CD14-positive monocyte (primary cell): ENCODE measurements at regions of chr6 and their contacts with region 1.

Region 1: GRCh38 chr6:15691250-15691869 is 28.5 kb upstream of the DTNBP1 start:
- DNase-seq: peak; percentile 84 to 90 (median 88)
- H3K4me3 ChIP-seq: no peak overlapping the region
- H3K4me3 Mint-ChIP-seq: peak overlapping the region in 1 of 2 donors; percentile 35
- H3K27ac ChIP-seq: peak overlapping the region in 1 of 2 donors; percentile 50
- H3K27ac Mint-ChIP-seq: peak overlapping the region in 6 of 7 donors; percentile 0 to 96 (median 53)
- H3K4me1 ChIP-seq: peaks cover 23 to 24% of the 10 kb centered on the region in 2 donors
- H3K4me1 Mint-ChIP-seq: peaks cover 25% of the 10 kb centered on the region
- H3K27me3 ChIP-seq: no peaks in the 10 kb centered on the region
- H3K27me3 Mint-ChIP-seq: no peaks in the 10 kb centered on the region
- CTCF ChIP-seq: peak; percentile 100

Region 2: DNA sequence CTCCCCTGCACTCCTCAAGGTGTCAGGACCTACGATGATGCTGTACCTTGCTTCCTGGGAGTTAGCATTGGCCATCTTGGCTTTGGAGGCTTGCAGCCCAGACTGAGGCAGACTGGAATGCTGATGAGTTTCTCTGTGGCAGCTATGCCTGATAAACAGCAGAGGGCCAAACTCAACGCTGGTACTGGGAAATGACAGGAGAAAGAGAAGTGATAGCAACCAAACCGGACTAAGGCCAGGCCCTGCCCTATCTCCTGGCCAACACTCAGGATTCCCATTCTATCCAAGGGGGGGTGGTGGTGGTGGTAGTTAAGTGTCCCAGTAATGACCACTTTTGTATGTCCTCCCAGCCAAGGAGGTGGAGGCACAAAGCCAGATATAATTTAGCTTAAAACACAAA is 61.5 kb after region 1 on chr6:
- intact Hi-C with region 1: no loop called
- DNase-seq: no peak
- H3K4me3 ChIP-seq: no peak overlapping the region
- H3K4me3 Mint-ChIP-seq: no peak overlapping the region
- H3K27ac ChIP-seq: no peak overlapping the region
- H3K27ac Mint-ChIP-seq: no peak overlapping the region
- H3K4me1 ChIP-seq: no peaks in the 10 kb centered on the region
- H3K4me1 Mint-ChIP-seq: no peaks in the 10 kb centered on the region
- H3K27me3 ChIP-seq: no peaks in the 10 kb centered on the region
- H3K27me3 Mint-ChIP-seq: no peaks in the 10 kb centered on the region
- CTCF ChIP-seq: no peak

Region 3: GRCh38 chr6:16183187-16183664 is 491.9 kb after region 1 on chr6:
- intact Hi-C with region 1: loop called (anchors 5 kb)
- DNase-seq: peak; percentile 20 to 46 (median 38)
- H3K4me3 ChIP-seq: no peak overlapping the region
- H3K4me3 Mint-ChIP-seq: no peak overlapping the region
- H3K27ac ChIP-seq: no peak overlapping the region
- H3K27ac Mint-ChIP-seq: peak overlapping the region in 1 of 7 donors; percentile 4
- H3K4me1 ChIP-seq: peaks cover 0 to 9% of the 10 kb centered on the region in 2 donors
- H3K4me1 Mint-ChIP-seq: peaks cover 15% of the 10 kb centered on the region
- H3K27me3 ChIP-seq: no peaks in the 10 kb centered on the region
- H3K27me3 Mint-ChIP-seq: peaks cover 0 to 3% (median 0%) of the 10 kb centered on the region in 3 donors
- CTCF ChIP-seq: peak; percentile 73

Region 4: DNA sequence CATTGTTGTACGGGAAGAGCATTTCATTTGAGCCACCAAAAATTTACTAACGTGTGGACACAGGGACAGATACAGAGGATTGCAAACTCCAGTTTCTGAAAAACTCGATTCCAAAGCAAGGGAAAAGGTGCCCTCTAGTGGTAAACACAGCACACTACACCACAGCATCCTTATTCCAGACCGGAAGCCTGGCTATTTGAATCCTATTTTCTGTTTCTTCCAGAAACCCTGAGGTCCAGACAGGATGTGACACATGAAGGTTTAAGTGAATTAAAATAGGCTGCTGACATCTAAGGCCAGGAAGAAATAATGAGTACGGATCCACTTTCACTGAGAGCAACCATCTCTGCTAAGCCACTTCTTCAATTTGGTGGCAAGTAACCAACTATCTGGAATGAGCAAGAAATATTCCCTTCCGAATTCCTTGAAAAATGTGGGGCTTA is 515.3 kb after region 1 on chr6:
- intact Hi-C with region 1: loop called (anchors 1 to 2 kb)
- DNase-seq: peak; percentile 40 to 62 (median 57)
- H3K4me3 ChIP-seq: no peak overlapping the region
- H3K4me3 Mint-ChIP-seq: no peak overlapping the region
- H3K27ac ChIP-seq: no peak overlapping the region
- H3K27ac Mint-ChIP-seq: peak overlapping the region in 1 of 7 donors; percentile 23
- H3K4me1 ChIP-seq: no peaks in the 10 kb centered on the region
- H3K4me1 Mint-ChIP-seq: peaks cover 1% of the 10 kb centered on the region
- H3K27me3 ChIP-seq: no peaks in the 10 kb centered on the region
- H3K27me3 Mint-ChIP-seq: peaks cover 0 to 6% (median 2%) of the 10 kb centered on the region in 3 donors
- CTCF ChIP-seq: peak; percentile 98